Gastrocnemius medialis (tissue), 4 donors: ENCODE measurements at regions of chr9 and their contacts with region 1.

Region 1: DNA sequence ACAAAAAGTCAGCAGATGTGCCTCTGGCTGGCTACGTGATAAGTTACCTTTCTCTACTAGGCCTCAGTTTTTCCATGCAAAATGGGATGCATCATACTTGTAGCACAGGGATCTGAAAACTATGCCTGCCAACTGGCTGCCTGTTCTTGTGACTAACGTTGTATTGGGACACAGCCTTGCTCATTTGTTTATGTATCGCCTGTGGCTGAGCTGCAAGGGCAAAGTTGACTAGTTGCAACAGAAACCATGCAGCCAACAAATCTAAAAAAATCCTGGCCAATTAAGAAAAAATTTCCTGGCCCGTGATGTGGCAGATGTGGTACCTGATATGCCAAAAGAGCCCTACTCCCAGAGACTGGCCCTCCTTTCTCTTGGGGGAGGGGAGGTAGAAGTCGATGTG is 131.3 kb downstream of the SEC61B start:
- DNase-seq: no peak
- ATAC-seq: no peak
- H3K4me3 ChIP-seq: no peak overlapping the region
- H3K27ac ChIP-seq: peak overlapping the region in 3 of 4 donors; percentile 20 to 44 (median 38)
- H3K4me1 ChIP-seq: peaks cover 26 to 27% of the 10 kb centered on the region in 2 donors
- H3K27me3 ChIP-seq: no peaks in the 10 kb centered on the region
- CTCF ChIP-seq: no peak
- POLR2A ChIP-seq: no peak

Region 2: GRCh38 chr9:99104459-99105151 is 248.8 kb before region 1 on chr9 and contains the start of gene TGFBR1:
- in situ Hi-C with region 1: no loop called
- intact Hi-C with region 1: loop called (anchors 10 kb)
- DNase-seq: peak; percentile 87 to 91
- ATAC-seq: peak; percentile 86 to 89
- H3K4me3 ChIP-seq: peak within 1 kb of the TSS; percentile 73 to 97 (median 86)
- H3K27ac ChIP-seq: peak within 1 kb of the TSS; percentile 80 to 91 (median 88)
- H3K4me1 ChIP-seq: peaks cover 39 to 50% of the 10 kb centered on the region in 2 donors
- H3K27me3 ChIP-seq: no peaks in the 10 kb centered on the region
- CTCF ChIP-seq: no peak
- POLR2A ChIP-seq: peak; percentile 94 to 98
- total RNA-seq, gene TGFBR1: 13.5 to 19.0 (median 14.3) TPM

Region 3: DNA sequence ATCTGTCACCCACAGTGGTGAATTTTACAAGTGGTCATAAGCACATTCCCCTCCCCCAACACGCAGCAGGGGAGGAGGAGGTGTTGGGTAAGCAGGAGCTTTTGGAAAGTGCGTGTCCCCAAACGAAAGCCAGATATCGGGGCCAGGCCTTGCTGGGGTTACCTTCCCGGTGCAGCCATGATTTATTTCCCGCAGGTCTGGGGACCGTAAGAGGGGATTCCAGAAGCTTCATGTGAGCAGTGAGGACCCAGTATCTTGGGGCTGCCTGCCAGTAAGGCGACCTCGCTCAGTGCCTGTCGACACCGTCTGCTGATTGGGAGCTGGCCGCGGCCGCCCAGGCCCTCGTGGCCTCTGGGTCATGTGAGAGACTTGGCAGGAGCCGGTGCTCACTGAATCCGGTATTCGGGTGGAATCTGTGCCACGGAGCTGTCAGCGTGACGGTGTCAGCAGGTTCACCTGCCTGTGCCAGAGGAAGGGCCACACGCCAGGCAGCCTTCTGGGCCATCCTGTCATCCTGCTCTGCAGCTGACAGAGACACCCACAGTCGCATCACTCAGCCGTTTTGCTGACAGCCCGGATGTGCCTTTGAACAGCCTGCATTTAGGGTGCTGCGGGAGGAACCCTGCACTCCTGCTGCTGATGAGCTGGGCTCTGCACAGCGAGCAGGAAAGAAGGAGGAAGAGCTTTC is 94.0 kb before region 1 on chr9:
- in situ Hi-C with region 1: loop called in 2 of 4 experiments (anchors 5 kb)
- intact Hi-C with region 1: loop called (anchors 1 kb)
- DNase-seq: peak; percentile 97 to 99
- ATAC-seq: peak; percentile 59 to 63
- H3K4me3 ChIP-seq: peak overlapping the region; percentile 34 to 49 (median 44)
- H3K27ac ChIP-seq: peak overlapping the region; percentile 93 to 100 (median 98)
- H3K4me1 ChIP-seq: peaks cover 29 to 48% of the 10 kb centered on the region in 2 donors
- H3K27me3 ChIP-seq: no peaks in the 10 kb centered on the region
- CTCF ChIP-seq: peak in 1 of 5 experiments; percentile 38
- POLR2A ChIP-seq: peak; percentile 91 to 94

Region 4: GRCh38 chr9:99296291-99296951 is 57.0 kb before region 1 on chr9:
- in situ Hi-C with region 1: no loop called
- intact Hi-C with region 1: loop called (anchors 2 kb)
- DNase-seq: peak in 1 of 2 donors; percentile 16
- ATAC-seq: peak in 1 of 2 donors; percentile 12
- H3K4me3 ChIP-seq: peak overlapping the region; percentile 19 to 44 (median 28)
- H3K27ac ChIP-seq: peak overlapping the region in 1 of 4 donors; percentile 13
- H3K4me1 ChIP-seq: peaks cover 0 to 5% of the 10 kb centered on the region in 2 donors
- H3K27me3 ChIP-seq: no peaks in the 10 kb centered on the region
- CTCF ChIP-seq: no peak
- POLR2A ChIP-seq: no peak

Region 5: GRCh38 chr9:99513441-99514112 is 160.2 kb after region 1 on chr9:
- in situ Hi-C with region 1: no loop called
- intact Hi-C with region 1: no loop called
- DNase-seq: no peak
- ATAC-seq: no peak
- H3K4me3 ChIP-seq: no peak overlapping the region
- H3K27ac ChIP-seq: no peak overlapping the region
- H3K4me1 ChIP-seq: no peaks in the 10 kb centered on the region
- H3K27me3 ChIP-seq: no peaks in the 10 kb centered on the region
- CTCF ChIP-seq: no peak
- POLR2A ChIP-seq: no peak

Region 6: DNA sequence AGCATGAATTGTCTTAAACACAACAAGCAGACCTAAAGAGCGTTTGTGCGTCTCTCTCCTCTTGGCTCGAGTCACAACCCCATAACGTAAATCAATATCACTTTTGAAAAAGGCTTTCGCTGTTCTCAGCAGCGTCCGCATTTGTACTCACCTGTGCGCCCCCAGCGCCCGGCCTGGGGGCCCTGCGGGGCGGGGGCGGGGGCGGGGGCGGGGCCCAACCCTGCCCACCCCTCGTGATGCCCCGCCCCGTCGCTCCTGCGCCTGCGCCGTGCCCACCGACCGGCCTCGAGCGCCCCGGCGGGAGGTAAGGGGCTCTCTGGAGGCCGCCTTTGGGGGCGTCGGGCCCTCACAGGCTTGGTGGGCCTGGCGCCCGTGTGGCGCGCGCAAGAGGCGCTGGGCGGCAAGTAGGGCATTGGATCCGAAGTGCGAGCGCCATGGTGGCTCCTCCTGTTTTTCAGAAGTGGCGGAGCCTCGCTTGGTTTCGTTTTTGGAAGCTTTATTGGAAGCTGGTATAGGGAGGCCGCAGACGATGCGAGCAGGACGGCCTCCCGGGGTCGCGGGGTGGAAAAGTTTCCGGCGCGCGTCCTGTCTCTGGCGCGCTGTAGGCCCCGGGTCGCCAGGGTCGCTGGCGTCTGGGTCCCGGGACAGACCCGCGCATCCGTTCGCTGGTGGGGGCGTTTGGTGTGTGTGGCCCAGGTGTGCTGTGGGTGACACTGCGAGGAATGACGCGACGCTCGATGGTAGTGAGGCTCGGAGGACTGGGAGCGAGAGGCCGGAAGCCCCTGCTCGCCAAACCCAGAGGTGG is 553.2 kb after region 1 on chr9 and contains the start of gene STX17:
- in situ Hi-C with region 1: no loop called
- intact Hi-C with region 1: loop called (anchors 5 kb)
- DNase-seq: peak; percentile 53 to 70
- ATAC-seq: peak; percentile 89 to 93
- H3K4me3 ChIP-seq: peak within 1 kb of the TSS; percentile 95 to 99 (median 96)
- H3K27ac ChIP-seq: peak within 1 kb of the TSS; percentile 98 to 100 (median 98)
- H3K4me1 ChIP-seq: peaks cover 13 to 21% of the 10 kb centered on the region in 2 donors
- H3K27me3 ChIP-seq: no peaks in the 10 kb centered on the region
- CTCF ChIP-seq: no peak
- POLR2A ChIP-seq: peak; percentile 85 to 90
- total RNA-seq, gene STX17: 25.3 to 34.4 (median 31.6) TPM